ENCODE measurements at regions of chr3 and their contacts with region 1.

Region 1: DNA sequence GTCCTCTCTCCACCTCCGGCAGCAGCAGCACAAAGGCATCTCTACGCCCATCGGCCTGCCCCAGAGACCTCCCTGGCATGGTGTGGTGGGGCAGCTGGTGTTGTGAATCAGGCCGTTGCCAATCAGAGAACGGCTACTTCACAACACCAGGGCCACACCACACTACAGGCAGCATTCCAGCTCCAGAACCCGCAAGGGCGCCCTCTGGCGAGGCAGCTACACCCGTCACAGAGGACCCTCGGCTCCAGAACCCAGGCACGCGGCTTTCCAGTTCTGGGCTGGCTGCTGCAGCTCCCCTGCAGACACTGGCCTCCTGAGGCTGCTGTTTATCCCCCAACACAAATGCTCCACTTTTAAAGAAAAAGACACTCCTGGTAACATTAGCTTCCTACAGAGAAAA is 127.5 kb upstream of the TOPAZ1 start:
- DNase-seq: peak; percentile 54
- H3K4me3 ChIP-seq: no peak overlapping the region
- H3K27ac ChIP-seq: no peak overlapping the region
- H3K4me1 ChIP-seq: no peaks in the 10 kb centered on the region
- H3K27me3 ChIP-seq: no peaks in the 10 kb centered on the region
- CTCF ChIP-seq: peak; percentile 61

Region 2: DNA sequence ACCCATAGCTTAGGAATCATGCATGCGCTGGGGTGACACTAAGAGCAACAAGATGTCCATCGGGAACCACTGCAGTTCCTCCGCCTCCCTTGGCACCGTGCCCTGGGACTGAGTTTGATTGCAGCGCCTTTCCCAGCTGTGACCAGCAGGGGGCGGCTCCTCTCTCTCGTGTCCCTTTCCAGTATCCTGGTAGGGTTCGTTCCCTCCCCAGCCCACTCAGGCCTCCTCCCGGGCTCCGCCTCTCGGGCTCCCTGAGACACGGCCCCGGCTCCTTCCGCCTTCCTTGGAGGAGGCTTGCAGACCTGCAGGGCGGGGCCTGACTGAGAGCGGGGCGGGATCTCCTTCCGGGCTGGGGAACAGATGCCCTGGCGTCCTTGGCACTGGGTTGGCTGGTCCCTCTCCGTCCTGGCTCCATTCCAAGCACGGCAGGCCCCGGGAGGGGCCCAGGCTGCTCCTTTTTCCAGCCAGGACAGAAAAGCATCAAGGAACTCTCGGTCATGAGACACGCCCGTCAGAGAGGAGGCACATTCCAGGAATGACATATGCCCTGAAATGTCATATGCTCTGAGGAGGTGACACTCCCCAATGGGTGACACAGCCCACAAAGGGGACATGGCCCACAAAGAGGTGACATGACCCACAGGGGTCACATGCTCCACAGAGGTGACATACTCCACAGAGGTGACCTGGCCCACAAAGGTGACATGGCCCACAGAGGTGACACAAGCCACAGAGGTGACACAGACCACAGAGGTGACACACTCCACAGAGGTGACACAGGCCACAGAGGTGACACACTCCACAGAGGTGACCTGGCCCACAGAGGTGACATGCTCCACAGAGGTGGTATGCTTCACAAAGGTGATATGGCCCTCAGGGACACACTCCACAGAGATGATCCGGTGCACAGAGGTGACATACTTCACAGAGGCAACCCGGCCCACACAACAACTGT is 344.4 kb before region 1 on chr3:
- CTCF ChIA-PET with region 1: no interaction called
- POLR2A ChIA-PET with region 1: no interaction called
- intact Hi-C with region 1: loop called (anchors 5 kb)
- DNase-seq: peak; percentile 96
- H3K4me3 ChIP-seq: peak overlapping the region; percentile 17
- H3K27ac ChIP-seq: no peak overlapping the region
- H3K4me1 ChIP-seq: peaks cover 6% of the 10 kb centered on the region
- H3K27me3 ChIP-seq: no peaks in the 10 kb centered on the region
- CTCF ChIP-seq: peak; percentile 75

Region 3: GRCh38 chr3:43855674-43856299 is 258.4 kb before region 1 on chr3:
- CTCF ChIA-PET with region 1: no interaction called
- POLR2A ChIA-PET with region 1: no interaction called
- intact Hi-C with region 1: loop called (anchors 10 kb)
- DNase-seq: peak; percentile 72
- H3K4me3 ChIP-seq: no peak overlapping the region
- H3K27ac ChIP-seq: no peak overlapping the region
- H3K4me1 ChIP-seq: no peaks in the 10 kb centered on the region
- H3K27me3 ChIP-seq: no peaks in the 10 kb centered on the region
- CTCF ChIP-seq: peak; percentile 63

Region 4: GRCh38 chr3:43894176-43895049 is 219.7 kb before region 1 on chr3:
- CTCF ChIA-PET with region 1: interaction called, 11 read pairs
- POLR2A ChIA-PET with region 1: no interaction called
- intact Hi-C with region 1: no loop called
- DNase-seq: peak; percentile 84
- H3K4me3 ChIP-seq: peak overlapping the region; percentile 33
- H3K27ac ChIP-seq: no peak overlapping the region
- H3K4me1 ChIP-seq: peaks cover 12% of the 10 kb centered on the region
- H3K27me3 ChIP-seq: no peaks in the 10 kb centered on the region
- CTCF ChIP-seq: 0 out of 2 replicates have a peak, but pooled peaks have one; percentile 21

Region 5: DNA sequence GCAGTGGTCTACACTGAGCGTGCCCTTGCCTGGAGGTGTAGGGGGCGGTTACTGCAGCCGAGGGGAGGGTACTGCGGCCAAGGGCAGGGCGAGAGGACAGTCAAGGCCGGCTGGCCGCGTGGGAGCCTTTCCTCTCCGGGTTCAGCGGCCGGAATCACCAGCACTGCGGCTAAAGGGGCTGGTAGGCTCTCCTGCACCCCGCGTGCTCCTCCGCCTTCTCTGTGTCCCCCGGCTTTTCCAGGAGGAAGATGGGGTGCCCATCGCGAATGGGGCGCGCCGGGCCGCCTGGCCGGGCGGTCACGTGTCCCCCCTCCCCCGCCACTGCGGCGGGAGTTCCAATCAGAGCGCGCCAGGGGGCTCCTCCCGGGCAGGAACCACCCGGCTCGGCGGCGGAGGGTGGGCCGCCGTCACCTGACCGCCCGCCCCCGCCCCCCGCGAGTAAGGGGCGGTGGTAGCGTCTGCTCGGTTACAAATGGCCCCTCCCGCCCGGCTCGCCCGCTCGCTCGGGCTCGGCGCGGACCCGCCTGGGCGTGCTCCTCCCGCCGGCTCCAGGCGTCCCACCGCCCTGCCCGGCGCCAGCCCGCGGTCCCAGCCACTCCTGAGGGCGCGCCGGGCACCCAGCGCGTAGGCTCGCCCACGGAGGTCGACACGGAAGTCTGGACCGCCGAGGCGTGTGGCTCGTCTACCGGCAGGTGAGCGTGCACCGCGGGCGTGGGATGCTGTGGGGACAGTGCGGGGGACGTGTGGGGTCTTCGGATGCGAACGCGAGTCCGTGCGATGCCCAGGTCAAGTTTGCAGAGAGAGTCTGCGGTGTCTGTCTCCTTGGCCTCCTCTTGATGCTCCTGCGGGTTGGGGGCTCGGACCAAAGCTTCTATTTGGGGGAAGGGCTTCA is 115.1 kb before region 1 on chr3:
- CTCF ChIA-PET with region 1: no interaction called
- POLR2A ChIA-PET with region 1: no interaction called
- intact Hi-C with region 1: loop called (anchors 10 kb)
- DNase-seq: peak; percentile 80
- H3K4me3 ChIP-seq: peak overlapping the region; percentile 63
- H3K27ac ChIP-seq: no peak overlapping the region
- H3K4me1 ChIP-seq: no peaks in the 10 kb centered on the region
- H3K27me3 ChIP-seq: peaks cover 5% of the 10 kb centered on the region
- CTCF ChIP-seq: no peak